Heart right ventricle (tissue), 16 donors: ENCODE measurements at regions of chr4 and their contacts with region 1.

Region 1: DNA sequence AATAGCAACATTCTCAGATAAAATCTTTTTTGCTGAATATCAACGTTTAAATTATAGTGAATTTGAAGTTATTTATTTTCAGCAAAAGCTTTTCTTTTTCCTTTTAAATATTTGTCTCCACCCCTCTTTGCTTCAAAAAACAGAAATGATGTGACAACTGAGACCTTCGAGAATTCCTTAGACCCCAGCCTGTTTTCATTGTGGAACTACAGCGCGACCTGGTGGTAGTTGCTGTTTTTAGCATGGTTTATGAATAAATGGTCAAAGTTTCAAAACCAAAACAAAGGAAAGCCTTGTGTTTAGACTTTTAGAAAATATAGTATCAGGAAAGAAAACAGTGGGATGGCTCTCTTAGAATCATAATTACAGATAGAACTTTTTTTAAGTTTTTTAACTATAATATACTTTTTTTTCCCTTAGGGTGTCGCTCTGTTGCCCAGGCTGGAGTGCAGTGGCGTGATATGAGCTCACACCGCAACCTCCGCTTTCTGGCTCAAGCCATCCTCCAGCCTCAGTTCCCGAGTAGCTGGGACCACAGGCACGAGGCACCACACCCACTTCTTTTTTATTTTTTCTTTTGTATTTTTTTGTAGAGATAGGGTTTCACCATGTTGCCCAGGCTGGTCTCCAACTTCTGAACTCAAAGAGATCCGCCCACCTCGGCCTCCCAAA is 26.8 kb upstream of the TMEM184C start:
- DNase-seq: peak; percentile 28 to 55
- ATAC-seq: peak in 6 of 8 donors; percentile 33 to 74 (median 56)
- H3K4me3 ChIP-seq: no peak overlapping the region
- H3K27ac ChIP-seq: peak overlapping the region in 1 of 10 donors; percentile 13
- H3K4me1 ChIP-seq: peaks cover 0 to 17% (median 0%) of the 10 kb centered on the region in 9 donors
- H3K27me3 ChIP-seq: peaks cover 0 to 3% (median 0%) of the 10 kb centered on the region in 7 donors
- CTCF ChIP-seq: peak; percentile 42 to 84 (median 78)

Region 2: DNA sequence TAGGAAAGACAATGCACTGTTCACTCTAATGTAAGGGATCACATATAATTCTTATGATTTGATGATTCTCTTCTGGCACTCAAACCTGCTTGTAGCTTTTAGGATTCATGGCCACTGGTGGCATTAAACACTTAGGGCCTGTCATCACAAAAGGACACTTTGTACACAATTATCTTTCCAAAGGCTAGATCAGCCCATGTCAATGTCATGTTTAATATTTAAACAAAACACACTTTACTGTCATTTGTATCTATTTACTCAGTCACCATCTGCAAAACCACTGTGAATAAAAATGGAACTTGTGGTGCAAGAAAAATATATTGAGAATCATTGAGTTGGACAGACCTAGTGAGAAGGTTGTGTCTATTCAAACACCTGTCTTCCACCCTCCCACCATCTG is 561.1 kb before region 1 on chr4:
- intact Hi-C with region 1: loop called in 2 of 10 experiments (anchors 10 kb)
- DNase-seq: no peak
- ATAC-seq: no peak
- H3K4me3 ChIP-seq: no peak overlapping the region
- H3K27ac ChIP-seq: no peak overlapping the region
- H3K4me1 ChIP-seq: no peaks in the 10 kb centered on the region
- H3K27me3 ChIP-seq: no peaks in the 10 kb centered on the region
- CTCF ChIP-seq: no peak

Region 3: GRCh38 chr4:147103403-147103946 is 486.9 kb before region 1 on chr4:
- intact Hi-C with region 1: loop called in 3 of 10 experiments (anchors 5 to 10 kb)
- DNase-seq: peak; percentile 23 to 37
- ATAC-seq: peak; percentile 82 to 99 (median 94)
- H3K4me3 ChIP-seq: no peak overlapping the region
- H3K27ac ChIP-seq: peak overlapping the region in 8 of 10 donors; percentile 27 to 55 (median 35)
- H3K4me1 ChIP-seq: peaks cover 0 to 24% (median 17%) of the 10 kb centered on the region in 9 donors
- H3K27me3 ChIP-seq: no peaks in the 10 kb centered on the region
- CTCF ChIP-seq: no peak

Region 4: GRCh38 chr4:147118528-147118927 is 471.9 kb before region 1 on chr4:
- intact Hi-C with region 1: loop called in 3 of 10 experiments (anchors 5 kb)
- DNase-seq: peak in 1 of 2 donors; percentile 49
- ATAC-seq: peak; percentile 67 to 84 (median 76)
- H3K4me3 ChIP-seq: no peak overlapping the region
- H3K27ac ChIP-seq: peak overlapping the region in 5 of 10 donors; percentile 9 to 60 (median 45)
- H3K4me1 ChIP-seq: peaks cover 3 to 39% (median 28%) of the 10 kb centered on the region in 9 donors
- H3K27me3 ChIP-seq: no peaks in the 10 kb centered on the region
- CTCF ChIP-seq: no peak

Region 5: DNA sequence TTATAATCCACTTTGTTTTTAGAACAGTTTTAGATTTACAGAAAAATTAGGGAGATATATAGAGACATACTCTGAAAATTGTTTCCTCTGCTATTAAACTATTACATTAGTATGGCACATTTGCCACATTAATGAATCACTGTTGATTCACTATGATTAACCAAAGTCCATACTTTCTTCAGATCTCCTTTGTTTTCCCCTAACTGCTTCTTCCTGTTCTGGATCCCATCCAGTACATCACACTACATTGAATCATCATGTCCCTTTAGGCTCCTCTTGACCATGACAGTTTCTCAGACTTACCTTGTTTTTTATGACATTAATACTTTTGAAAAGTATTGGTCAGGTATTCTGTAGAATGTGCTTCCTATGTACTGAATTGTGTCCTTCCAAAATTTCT is 218.7 kb before region 1 on chr4:
- intact Hi-C with region 1: no loop called
- DNase-seq: no peak
- ATAC-seq: no peak
- H3K4me3 ChIP-seq: no peak overlapping the region
- H3K27ac ChIP-seq: no peak overlapping the region
- H3K4me1 ChIP-seq: no peaks in the 10 kb centered on the region
- H3K27me3 ChIP-seq: no peaks in the 10 kb centered on the region
- CTCF ChIP-seq: no peak

Region 6: GRCh38 chr4:147513952-147514351 is 76.4 kb before region 1 on chr4:
- intact Hi-C with region 1: loop called in 1 of 10 experiments (anchors 5 kb)
- DNase-seq: no peak
- ATAC-seq: no peak
- H3K4me3 ChIP-seq: no peak overlapping the region
- H3K27ac ChIP-seq: no peak overlapping the region
- H3K4me1 ChIP-seq: peaks cover 0 to 66% (median 5%) of the 10 kb centered on the region in 9 donors
- H3K27me3 ChIP-seq: no peaks in the 10 kb centered on the region
- CTCF ChIP-seq: no peak